Activated T-helper 2 cell treated with anti-CD3 and anti-CD28 coated beads, Interferon-gamma antibody, Interleukin-2, Interleukin-4, amounts not matched to agents 10 μg/mL and 5 μg/mL and 100 μg/mL, durations not matched to agents 14 hours and 24 hours and 36 hours (primary cell): ENCODE measurements at regions of chr3 and their contacts with region 1.

Region 1: GRCh38 chr3:38521391-38521987 is 25.3 kb downstream of the EXOG start:
- DNase-seq: peak; percentile 28
- H3K4me3 Mint-ChIP-seq: no peak overlapping the region
- H3K27ac Mint-ChIP-seq: no peak overlapping the region
- H3K4me1 Mint-ChIP-seq: peaks cover 21% of the 10 kb centered on the region
- H3K27me3 Mint-ChIP-seq: no peaks in the 10 kb centered on the region

Region 2: GRCh38 chr3:38651154-38651789 is 129.8 kb after region 1 on chr3:
- intact Hi-C with region 1: loop called (anchors 1 kb)
- DNase-seq: peak; percentile 58
- H3K4me3 Mint-ChIP-seq: no peak overlapping the region
- H3K27ac Mint-ChIP-seq: no peak overlapping the region
- H3K4me1 Mint-ChIP-seq: peaks cover 7% of the 10 kb centered on the region
- H3K27me3 Mint-ChIP-seq: peaks cover 20% of the 10 kb centered on the region

Region 3: GRCh38 chr3:39000008-39000450 is 478.5 kb after region 1 on chr3:
- intact Hi-C with region 1: loop called (anchors 2 kb)
- DNase-seq: no peak
- H3K4me3 Mint-ChIP-seq: no peak overlapping the region
- H3K27ac Mint-ChIP-seq: no peak overlapping the region
- H3K4me1 Mint-ChIP-seq: no peaks in the 10 kb centered on the region
- H3K27me3 Mint-ChIP-seq: peaks cover 4% of the 10 kb centered on the region